ENCODE measurements at regions of chr3 and their contacts with region 1.

Region 1: GRCh38 chr3:112043603-112044201 is 9.2 kb downstream of the TMPRSS7 start:
- DNase-seq: no peak
- H3K4me3 ChIP-seq: no peak overlapping the region
- CTCF ChIP-seq: peak; percentile 75

Region 2: GRCh38 chr3:111668912-111669488 is 374.7 kb before region 1 on chr3:
- CTCF ChIA-PET with region 1: interaction called, 13 read pairs
- POLR2A ChIA-PET with region 1: no interaction called
- DNase-seq: no peak
- H3K4me3 ChIP-seq: no peak overlapping the region
- CTCF ChIP-seq: peak; percentile 58

Region 3: DNA sequence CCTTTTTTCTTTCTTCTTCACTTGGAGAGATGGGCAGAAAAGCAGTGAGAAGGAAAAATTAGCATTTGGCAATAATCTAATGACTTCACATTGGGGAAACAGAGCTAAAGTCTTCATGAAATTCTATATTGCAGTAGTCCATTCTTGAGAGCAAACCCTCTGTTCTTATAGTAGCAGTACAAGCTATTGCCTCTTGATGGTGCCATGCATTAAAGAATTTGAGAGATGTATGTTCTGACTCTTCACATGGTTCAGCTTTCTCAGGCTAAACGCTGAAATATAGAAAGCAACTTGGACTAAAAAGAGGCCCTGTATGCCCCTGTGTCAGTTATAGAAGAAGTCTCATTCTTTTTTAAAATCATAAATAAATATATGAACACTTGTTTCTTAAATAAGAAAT is 148.6 kb before region 1 on chr3:
- CTCF ChIA-PET with region 1: interaction called, 12 read pairs
- POLR2A ChIA-PET with region 1: no interaction called
- DNase-seq: no peak
- H3K4me3 ChIP-seq: no peak overlapping the region
- CTCF ChIP-seq: peak; percentile 36

Region 4: GRCh38 chr3:111978493-111979433 is 64.9 kb before region 1 on chr3 and contains the start of gene ABHD10:
- CTCF ChIA-PET with region 1: interaction called, 15 read pairs
- POLR2A ChIA-PET with region 1: no interaction called
- DNase-seq: peak; percentile 84
- H3K4me3 ChIP-seq: peak within 1 kb of the TSS; percentile 89
- CTCF ChIP-seq: no peak

Region 5: DNA sequence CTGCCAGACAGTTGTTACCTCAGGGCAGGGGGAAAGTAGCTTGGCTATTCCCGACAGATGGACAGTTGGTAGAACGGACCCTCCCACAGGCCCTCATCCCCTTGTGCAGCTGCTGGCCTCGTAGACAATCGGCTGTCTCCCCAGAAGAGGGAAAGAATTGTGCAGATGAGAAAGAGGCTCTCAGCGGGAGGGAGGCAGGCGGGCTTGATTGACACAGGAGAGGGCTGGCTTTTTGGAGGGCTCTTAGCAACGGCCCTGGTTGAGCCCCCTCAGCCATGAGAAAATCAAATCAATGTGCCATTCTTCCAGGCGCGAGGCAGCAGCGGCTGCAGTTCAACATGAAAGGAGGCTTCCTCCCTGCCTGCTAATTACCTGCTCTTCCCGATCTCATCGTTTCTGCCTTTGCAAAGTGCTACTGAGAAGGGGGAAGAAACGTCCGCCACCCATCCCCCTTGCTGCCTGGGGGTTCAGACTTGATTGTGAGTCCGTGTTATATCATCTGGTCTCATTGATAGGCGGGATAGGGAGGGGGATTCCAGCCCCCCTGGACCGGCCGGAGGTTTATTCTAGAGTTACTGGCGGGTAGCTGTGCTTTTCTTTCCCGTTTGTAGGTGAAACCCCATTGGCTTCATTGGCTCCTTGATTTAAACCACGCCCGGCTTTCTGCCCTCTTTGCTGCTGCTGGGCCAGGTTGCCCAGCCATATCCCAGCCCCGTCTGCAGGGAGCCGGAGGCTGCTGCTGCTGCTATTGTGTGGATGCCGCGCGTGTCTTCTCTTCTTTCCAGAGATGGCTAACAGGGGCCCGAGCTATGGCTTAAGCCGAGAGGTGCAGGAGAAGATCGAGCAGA is 44.8 kb before region 1 on chr3 and contains the start of gene TAGLN3:
- CTCF ChIA-PET with region 1: interaction called, 21 read pairs
- POLR2A ChIA-PET with region 1: no interaction called
- DNase-seq: no peak
- H3K4me3 ChIP-seq: peak within 1 kb of the TSS; percentile 47
- CTCF ChIP-seq: no peak

Region 6: DNA sequence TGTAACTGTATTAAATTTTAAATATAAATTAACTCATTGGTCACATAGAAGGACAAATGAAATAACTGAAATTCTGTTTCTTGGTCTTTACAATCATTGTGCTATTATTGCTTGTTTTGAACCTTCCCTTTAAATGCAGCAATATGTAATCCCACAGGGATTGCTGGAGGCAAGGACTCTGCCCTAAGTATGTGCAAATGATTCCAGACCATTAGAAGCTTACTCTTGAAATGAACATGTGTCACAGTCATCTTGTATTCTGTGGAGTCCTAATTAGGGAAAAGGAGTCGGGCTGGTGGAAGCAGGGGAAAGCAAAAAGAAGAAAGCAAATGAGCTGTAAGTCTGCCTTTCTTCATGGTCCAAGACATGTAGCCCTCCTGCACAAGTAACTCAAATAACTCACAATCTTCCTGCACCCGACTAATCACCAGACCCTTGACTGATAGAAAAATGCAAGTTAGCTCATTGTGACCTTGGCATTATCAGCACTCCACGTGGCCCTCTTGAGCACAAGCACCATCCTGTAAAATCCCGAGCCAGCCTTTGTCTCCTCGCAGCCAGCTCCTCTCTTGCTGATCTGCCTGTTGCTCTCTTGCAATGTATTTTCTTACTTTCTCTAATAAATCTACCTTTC is 11.5 kb before region 1 on chr3:
- CTCF ChIA-PET with region 1: interaction called, 40 read pairs
- POLR2A ChIA-PET with region 1: no interaction called
- DNase-seq: no peak
- H3K4me3 ChIP-seq: no peak overlapping the region
- CTCF ChIP-seq: no peak

Region 7: DNA sequence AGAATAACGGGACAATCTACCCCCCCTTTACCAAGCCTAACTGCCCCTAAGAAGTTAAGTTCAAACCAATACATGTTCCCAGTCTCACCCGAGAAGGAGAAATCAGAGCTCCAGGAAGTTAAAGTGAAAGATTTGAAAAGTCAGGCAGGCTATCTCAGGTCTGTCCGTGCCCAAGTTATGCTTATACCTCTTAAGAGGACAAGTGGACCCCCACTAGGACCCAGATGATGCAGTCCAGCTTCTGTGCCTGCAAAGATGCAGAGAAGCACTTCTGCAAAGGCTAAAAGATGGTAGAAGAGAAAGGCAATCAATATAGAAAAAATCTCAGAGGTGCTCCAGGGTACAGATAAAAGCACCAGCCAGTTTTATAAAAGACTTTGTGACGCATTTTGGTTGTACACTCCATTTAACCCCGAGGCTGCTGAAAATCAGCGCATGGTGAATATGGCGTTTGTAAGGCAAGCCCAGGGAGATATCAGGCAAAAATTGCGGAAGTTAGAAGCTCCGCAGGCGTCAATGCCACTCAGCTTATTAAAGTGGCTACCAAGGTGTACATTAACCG is 260.1 kb after region 1 on chr3:
- CTCF ChIA-PET with region 1: no interaction called
- POLR2A ChIA-PET with region 1: no interaction called
- DNase-seq: no peak
- H3K4me3 ChIP-seq: peak overlapping the region; percentile 54
- CTCF ChIP-seq: no peak